ENCODE measurements at regions of chr15 and their contacts with region 1.

Region 1: DNA sequence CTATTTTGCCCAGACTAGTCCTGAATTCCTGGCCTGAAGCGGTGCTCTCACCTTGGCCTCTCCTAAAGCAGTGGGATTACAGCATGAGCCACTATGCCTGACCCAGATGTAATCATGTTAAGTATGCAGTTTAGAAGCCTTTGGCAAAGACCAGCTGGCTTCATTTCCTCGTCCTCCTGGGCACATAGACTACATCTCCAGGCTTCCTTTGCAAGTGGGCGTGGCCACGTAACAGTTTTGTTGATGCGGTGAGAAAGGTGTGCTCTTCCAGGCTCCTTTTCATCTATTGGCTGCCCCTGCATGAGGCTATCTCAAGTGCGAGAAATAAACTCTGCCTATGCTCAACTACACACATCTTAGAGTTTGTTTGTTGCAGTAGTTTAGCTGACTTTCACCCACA is 13.0 kb downstream of the SV2B start:
- DNase-seq: peak in 1 of 2 donors; percentile 39
- H3K4me3 ChIP-seq: no peak overlapping the region
- CTCF ChIP-seq: no peak
- POLR2A ChIP-seq: no peak

Region 2: GRCh38 chr15:89749951-89750559 is 1363.0 kb before region 1 on chr15:
- intact Hi-C with region 1: loop called (anchors 5 kb)
- DNase-seq: no peak
- H3K4me3 ChIP-seq: peak overlapping the region; percentile 18
- CTCF ChIP-seq: no peak
- POLR2A ChIP-seq: no peak

Region 3: GRCh38 chr15:90994417-90995311 is 118.4 kb before region 1 on chr15 and contains the start of gene PRC1:
- intact Hi-C with region 1: no loop called
- DNase-seq: peak; percentile 96 to 100
- H3K4me3 ChIP-seq: peak within 1 kb of the TSS; percentile 94
- CTCF ChIP-seq: peak in 1 of 3 donors; percentile 43
- POLR2A ChIP-seq: no peak
- total RNA-seq, gene PRC1: 16.3 to 24.4 (median 19.5) TPM